GM13976 (cell line): ENCODE measurements at regions of chr11 and their contacts with region 1.

Region 1: DNA sequence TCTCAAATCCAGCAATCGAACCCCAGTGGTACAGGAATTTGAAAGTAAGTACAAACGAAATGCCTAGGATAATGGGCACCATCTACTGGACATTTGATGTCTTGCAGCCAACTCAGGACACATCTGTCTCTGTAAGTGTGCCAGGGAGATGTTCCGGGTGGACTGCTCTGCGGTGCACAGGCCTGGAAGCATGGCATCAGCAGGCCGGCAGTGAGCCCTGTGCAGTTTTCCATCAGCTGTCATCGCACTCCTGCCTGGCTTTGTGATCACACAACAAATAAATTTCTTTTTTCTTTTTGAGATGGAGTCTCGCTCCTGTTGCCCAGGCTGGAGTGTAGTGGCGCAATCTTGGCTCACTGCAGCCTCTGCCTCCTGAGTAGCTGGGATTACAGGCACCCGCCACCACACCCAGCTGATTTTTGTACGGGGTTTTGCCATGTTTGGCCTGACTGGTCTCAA is 71.0 kb downstream of the JAM3 start:
- DNase-seq: peak; percentile 71
- CTCF ChIP-seq: peak; percentile 51

Region 2: GRCh38 chr11:133927690-133928627 is 211.9 kb before region 1 on chr11:
- in situ Hi-C with region 1: loop called (anchors 10 kb)
- DNase-seq: peak; percentile 87
- CTCF ChIP-seq: peak; percentile 89